ENCODE measurements at regions of chr2 and their contacts with region 1.

Region 1: GRCh38 chr2:173965329-173966025 is at the start of gene SP3:
- DNase-seq: peak; percentile 88 to 97 (median 94)
- ATAC-seq: peak; percentile 75
- H3K4me3 ChIP-seq: peak within 1 kb of the TSS; percentile 88
- H3K4me3 Mint-ChIP-seq: peak within 1 kb of the TSS; percentile 91 to 99 (median 96)
- H3K27ac ChIP-seq: peak within 1 kb of the TSS; percentile 96
- H3K27ac Mint-ChIP-seq: peak within 1 kb of the TSS; percentile 97 to 100 (median 99)
- H3K4me1 ChIP-seq: peaks cover 13 to 25% of the 10 kb centered on the region in 2 donors
- H3K4me1 Mint-ChIP-seq: peaks cover 22 to 38% (median 31%) of the 10 kb centered on the region in 7 donors
- H3K27me3 ChIP-seq: no peaks in the 10 kb centered on the region
- H3K27me3 Mint-ChIP-seq: peaks cover 0 to 2% (median 0%) of the 10 kb centered on the region in 5 donors
- total RNA-seq, gene SP3: 108 to 158 (median 131) TPM

Region 2: GRCh38 chr2:172496160-172496608 is 1469.3 kb before region 1 on chr2:
- CTCF ChIA-PET with region 1: no interaction called
- POLR2A ChIA-PET with region 1: no interaction called
- intact Hi-C with region 1: loop called in 1 of 2 experiments (anchors 10 kb)
- DNase-seq: peak in 7 of 9 donors; percentile 72 to 88 (median 83)
- ATAC-seq: peak; percentile 94
- H3K4me3 ChIP-seq: peak overlapping the region; percentile 22
- H3K4me3 Mint-ChIP-seq: peak overlapping the region; percentile 54 to 86 (median 77)
- H3K27ac ChIP-seq: peak overlapping the region; percentile 68
- H3K27ac Mint-ChIP-seq: peak overlapping the region; percentile 86 to 99 (median 97)
- H3K4me1 ChIP-seq: peaks cover 22 to 83% of the 10 kb centered on the region in 2 donors
- H3K4me1 Mint-ChIP-seq: peaks cover 32 to 94% (median 85%) of the 10 kb centered on the region in 7 donors
- H3K27me3 ChIP-seq: no peaks in the 10 kb centered on the region
- H3K27me3 Mint-ChIP-seq: no peaks in the 10 kb centered on the region

Region 3: GRCh38 chr2:173922760-173923159 is 42.7 kb before region 1 on chr2:
- CTCF ChIA-PET with region 1: no interaction called
- POLR2A ChIA-PET with region 1: no interaction called
- intact Hi-C with region 1: loop called in 1 of 2 experiments (anchors 2 kb)
- DNase-seq: no peak
- ATAC-seq: no peak
- H3K4me3 ChIP-seq: no peak overlapping the region
- H3K4me3 Mint-ChIP-seq: peak overlapping the region in 3 of 10 donors; percentile 25 to 43 (median 35)
- H3K27ac ChIP-seq: no peak overlapping the region
- H3K27ac Mint-ChIP-seq: peak overlapping the region in 6 of 9 donors; percentile 29 to 76 (median 62)
- H3K4me1 ChIP-seq: peaks cover 17 to 24% of the 10 kb centered on the region in 2 donors
- H3K4me1 Mint-ChIP-seq: peaks cover 49 to 92% (median 85%) of the 10 kb centered on the region in 7 donors
- H3K27me3 ChIP-seq: no peaks in the 10 kb centered on the region
- H3K27me3 Mint-ChIP-seq: no peaks in the 10 kb centered on the region

Region 4: GRCh38 chr2:174012347-174013314 is 47.2 kb after region 1 on chr2:
- CTCF ChIA-PET with region 1: no interaction called
- POLR2A ChIA-PET with region 1: interaction called, 4 read pairs
- intact Hi-C with region 1: loop called in 1 of 2 experiments (anchors 1 kb)
- DNase-seq: peak in 7 of 9 donors; percentile 7 to 37 (median 13)
- ATAC-seq: peak; percentile 86
- H3K4me3 ChIP-seq: peak overlapping the region; percentile 57
- H3K4me3 Mint-ChIP-seq: peak overlapping the region; percentile 52 to 79 (median 67)
- H3K27ac ChIP-seq: no peak overlapping the region
- H3K27ac Mint-ChIP-seq: peak overlapping the region in 4 of 9 donors; percentile 22 to 68 (median 50)
- H3K4me1 ChIP-seq: no peaks in the 10 kb centered on the region
- H3K4me1 Mint-ChIP-seq: peaks cover 0 to 11% (median 5%) of the 10 kb centered on the region in 7 donors
- H3K27me3 ChIP-seq: no peaks in the 10 kb centered on the region
- H3K27me3 Mint-ChIP-seq: peaks cover 5 to 38% (median 11%) of the 10 kb centered on the region in 5 donors

Region 5: DNA sequence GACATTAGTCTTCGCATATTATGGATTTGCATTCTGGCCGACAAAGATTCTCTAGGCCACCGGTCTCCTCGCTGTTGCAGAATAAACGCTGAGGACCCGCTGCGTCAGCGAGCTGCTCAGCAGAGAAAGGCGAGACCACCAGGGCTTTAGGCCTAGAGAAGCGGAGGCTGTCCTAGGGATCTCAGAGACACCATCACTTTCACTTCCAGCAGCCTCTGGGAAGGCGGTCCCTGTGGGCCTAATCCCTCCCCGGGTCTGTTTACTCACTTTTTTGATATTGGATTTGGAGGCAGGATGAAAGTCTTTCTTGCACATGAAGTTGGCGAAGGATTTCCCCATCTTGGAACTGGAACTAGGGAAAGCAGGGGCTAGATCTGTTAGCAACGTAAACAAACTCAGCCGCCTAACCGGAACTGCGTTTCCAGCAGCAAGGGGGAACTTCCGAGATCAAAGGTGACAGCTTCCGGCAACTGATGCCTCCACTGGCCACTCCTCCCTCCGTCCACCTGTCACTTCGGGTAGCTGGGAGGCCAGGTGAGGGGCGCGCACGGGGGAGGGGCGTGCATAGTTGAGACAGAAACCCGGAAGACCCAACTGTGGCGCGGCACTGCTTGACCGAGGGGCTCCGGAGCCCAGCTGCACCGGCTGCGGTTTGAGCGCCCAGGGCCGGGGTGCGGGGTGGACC is 429.9 kb after region 1 on chr2 and contains the start of gene SCRN3:
- CTCF ChIA-PET with region 1: no interaction called
- POLR2A ChIA-PET with region 1: interaction called, 7 read pairs
- intact Hi-C with region 1: loop called (anchors 1 kb)
- DNase-seq: peak; percentile 49 to 89 (median 80)
- ATAC-seq: peak; percentile 93
- H3K4me3 ChIP-seq: peak within 1 kb of the TSS; percentile 85
- H3K4me3 Mint-ChIP-seq: peak within 1 kb of the TSS; percentile 86 to 100 (median 98)
- H3K27ac ChIP-seq: peak within 1 kb of the TSS; percentile 93
- H3K27ac Mint-ChIP-seq: peak within 1 kb of the TSS; percentile 97 to 100 (median 99)
- H3K4me1 ChIP-seq: peaks cover 18 to 23% of the 10 kb centered on the region in 2 donors
- H3K4me1 Mint-ChIP-seq: peaks cover 27 to 80% (median 65%) of the 10 kb centered on the region in 7 donors
- H3K27me3 ChIP-seq: no peaks in the 10 kb centered on the region
- H3K27me3 Mint-ChIP-seq: no peaks in the 10 kb centered on the region
- total RNA-seq, gene SCRN3: 12.3 to 22.1 (median 16.4) TPM

Region 6: DNA sequence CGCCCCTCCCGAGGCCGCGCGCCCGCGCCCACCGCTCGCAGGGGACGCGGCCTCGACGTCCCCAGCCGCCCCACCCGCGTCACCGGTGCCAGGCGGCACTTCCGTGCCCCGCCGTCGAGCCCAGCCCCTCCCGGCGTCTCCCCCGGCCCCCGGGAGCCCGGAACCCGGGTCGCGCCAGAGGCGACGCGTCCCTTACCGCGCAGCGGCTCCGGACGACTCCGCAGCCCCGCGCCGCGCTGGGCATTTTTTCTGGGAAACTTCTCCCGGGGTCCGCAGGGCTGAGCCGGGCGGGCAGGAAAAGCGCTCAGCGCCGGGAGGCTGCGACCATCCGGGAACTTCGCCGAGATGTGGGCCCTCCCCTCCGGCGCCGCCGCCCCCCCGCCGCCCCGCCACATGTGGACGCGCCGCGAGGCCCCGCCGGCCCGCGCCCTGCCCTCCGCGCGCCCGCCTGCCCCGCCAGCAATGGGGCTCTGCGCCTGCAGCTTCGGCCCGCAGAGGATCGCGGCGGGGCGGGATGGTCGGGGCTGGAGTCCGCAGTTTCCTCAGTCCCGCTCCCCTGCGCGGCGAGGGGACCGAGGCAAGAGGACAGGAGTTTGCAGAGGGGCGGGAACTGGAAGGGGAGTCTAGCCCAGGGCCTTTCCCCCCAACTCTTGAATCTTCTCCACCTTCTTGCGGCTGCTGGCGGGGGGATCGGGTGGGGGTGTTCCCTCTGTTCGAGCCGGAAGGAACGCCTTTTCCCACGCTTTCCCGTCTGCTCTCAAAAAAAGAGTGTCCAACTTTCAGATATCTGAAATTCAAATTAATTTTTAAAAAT is 717.3 kb after region 1 on chr2:
- CTCF ChIA-PET with region 1: no interaction called
- POLR2A ChIA-PET with region 1: no interaction called
- intact Hi-C with region 1: loop called in 1 of 2 experiments (anchors 5 kb)
- DNase-seq: peak; percentile 56 to 73 (median 71)
- ATAC-seq: peak; percentile 78
- H3K4me3 ChIP-seq: peak overlapping the region; percentile 72
- H3K4me3 Mint-ChIP-seq: peak overlapping the region; percentile 92 to 99 (median 96)
- H3K27ac ChIP-seq: peak overlapping the region; percentile 88
- H3K27ac Mint-ChIP-seq: peak overlapping the region; percentile 91 to 98 (median 96)
- H3K4me1 ChIP-seq: peaks cover 11% of the 10 kb centered on the region in 2 donors
- H3K4me1 Mint-ChIP-seq: peaks cover 34 to 69% (median 61%) of the 10 kb centered on the region in 7 donors
- H3K27me3 ChIP-seq: no peaks in the 10 kb centered on the region
- H3K27me3 Mint-ChIP-seq: no peaks in the 10 kb centered on the region